B cell (primary cell): ENCODE measurements at regions of chr19 and their contacts with region 1.

Region 1: DNA sequence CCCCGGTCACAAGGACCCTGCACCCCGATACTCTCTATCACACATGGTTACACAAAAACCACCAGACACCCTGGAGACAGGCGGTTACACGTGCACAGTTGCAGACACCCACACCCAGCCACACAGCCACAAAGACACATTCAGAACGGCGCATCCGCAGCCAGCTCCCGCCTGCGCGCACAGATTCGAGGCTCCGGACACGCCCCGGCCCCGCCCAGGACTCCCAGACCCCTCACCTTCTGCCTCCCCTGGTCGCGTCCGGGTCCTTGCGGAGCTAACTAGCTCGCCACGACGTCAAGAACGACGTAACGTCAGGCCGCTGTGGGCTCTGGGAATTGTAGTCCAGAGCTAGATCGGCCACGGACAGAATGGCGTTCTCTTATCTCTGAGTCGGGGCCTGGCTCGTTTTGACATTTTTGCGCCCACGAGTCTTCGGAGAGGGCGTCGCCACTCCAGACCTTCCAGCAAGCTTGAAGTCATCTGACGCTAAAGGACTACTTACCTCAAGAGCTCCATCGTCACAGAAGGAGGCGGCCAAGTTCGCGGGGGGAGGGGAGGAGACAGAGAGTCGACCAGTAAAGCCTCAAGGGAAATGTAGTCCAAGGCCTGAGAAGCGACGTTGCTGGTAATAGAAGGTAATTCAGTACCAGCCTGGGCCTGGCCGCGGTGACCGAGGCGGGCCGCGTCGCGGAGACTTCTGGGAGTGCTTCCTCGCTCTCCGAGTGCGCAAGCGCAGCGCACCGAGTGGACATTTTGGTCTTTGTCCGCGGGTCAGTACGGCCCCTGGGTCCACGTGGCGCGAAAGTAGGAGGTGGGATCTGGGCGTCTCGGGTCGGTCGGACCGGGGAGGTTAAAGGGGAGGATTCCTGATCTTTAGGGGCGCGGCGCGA is at the starts of genes ZNF146 and ZNF565:
- DNase-seq: peak; percentile 98
- ATAC-seq: peak; percentile 89
- H3K4me3 ChIP-seq: peak within 1 kb of the TSS; percentile 70 to 99 (median 85)
- H3K4me3 Mint-ChIP-seq: no peak within 1 kb of the TSS
- H3K27ac ChIP-seq: peak within 1 kb of the TSS; percentile 87 to 97
- H3K27ac Mint-ChIP-seq: peak within 1 kb of the TSS; percentile 41
- H3K4me1 ChIP-seq: peaks cover 13 to 21% of the 10 kb centered on the region in 2 donors
- H3K4me1 Mint-ChIP-seq: peaks cover 19% of the 10 kb centered on the region
- H3K27me3 ChIP-seq: no peaks in the 10 kb centered on the region
- H3K27me3 Mint-ChIP-seq: no peaks in the 10 kb centered on the region
- CTCF ChIP-seq: no peak
- total RNA-seq, gene ZNF146: 62.2 and 69.3 TPM in 2 replicates
- total RNA-seq, gene ZNF565: 5.2 and 5.5 TPM in 2 replicates

Region 2: GRCh38 chr19:35995048-35995993 is 219.3 kb before region 1 on chr19 and contains the start of gene SDHAF1:
- CTCF ChIA-PET with region 1: no interaction called
- POLR2A ChIA-PET with region 1: no interaction called
- intact Hi-C with region 1: loop called (anchors 1 kb)
- DNase-seq: peak; percentile 93
- ATAC-seq: peak; percentile 96
- H3K4me3 ChIP-seq: peak within 1 kb of the TSS; percentile 60 to 79 (median 77)
- H3K4me3 Mint-ChIP-seq: peak within 1 kb of the TSS; percentile 97
- H3K27ac ChIP-seq: peak within 1 kb of the TSS; percentile 55 to 81
- H3K27ac Mint-ChIP-seq: peak within 1 kb of the TSS; percentile 96
- H3K4me1 ChIP-seq: peaks cover 18 to 25% of the 10 kb centered on the region in 2 donors
- H3K4me1 Mint-ChIP-seq: peaks cover 32% of the 10 kb centered on the region
- H3K27me3 ChIP-seq: no peaks in the 10 kb centered on the region
- H3K27me3 Mint-ChIP-seq: no peaks in the 10 kb centered on the region
- CTCF ChIP-seq: no peak
- total RNA-seq, gene SDHAF1: 24.2 and 24.6 TPM in 2 replicates

Region 3: DNA sequence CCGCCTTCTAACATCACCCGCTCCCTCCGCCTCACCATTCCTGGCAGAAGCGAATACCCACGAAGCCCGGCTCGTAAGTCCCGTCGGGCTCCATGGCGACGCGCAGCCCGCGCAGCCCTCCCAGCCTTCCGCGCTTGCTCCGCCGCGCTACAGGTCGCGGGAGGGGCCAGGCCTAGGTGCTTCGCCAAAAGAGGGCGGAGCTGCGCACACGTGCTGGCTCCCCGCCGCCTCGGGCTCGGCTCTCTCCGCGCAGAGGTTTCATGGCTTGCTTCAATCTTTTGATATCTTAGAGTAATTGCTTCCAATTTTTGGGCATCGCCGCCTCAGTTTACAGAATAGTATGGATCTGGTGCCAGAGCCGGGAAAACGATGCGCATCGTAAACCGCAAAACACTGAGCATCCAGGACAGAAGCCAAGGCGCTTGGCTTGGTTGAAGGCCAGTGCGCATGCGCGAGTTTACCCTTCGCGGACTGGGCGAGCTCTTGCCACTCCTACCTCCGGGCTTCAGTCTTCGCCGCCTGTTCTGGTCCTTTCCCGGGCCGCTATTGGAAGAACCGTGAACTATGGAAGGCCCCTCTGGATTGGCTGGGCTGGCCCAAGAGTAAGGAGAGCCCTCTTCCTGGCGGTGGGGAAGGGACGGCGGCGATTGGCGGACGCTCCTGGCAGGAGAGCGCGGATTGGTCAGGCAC is 99.7 kb before region 1 on chr19 and contains the start of gene POLR2I:
- CTCF ChIA-PET with region 1: interaction called, 3 read pairs
- POLR2A ChIA-PET with region 1: interaction called, 8 read pairs
- intact Hi-C with region 1: loop called (anchors 1 kb)
- DNase-seq: peak; percentile 100
- ATAC-seq: peak; percentile 87
- H3K4me3 ChIP-seq: peak within 1 kb of the TSS; percentile 76 to 91 (median 79)
- H3K4me3 Mint-ChIP-seq: peak within 1 kb of the TSS; percentile 95
- H3K27ac ChIP-seq: peak within 1 kb of the TSS; percentile 84 to 90
- H3K27ac Mint-ChIP-seq: peak within 1 kb of the TSS; percentile 99
- H3K4me1 ChIP-seq: peaks cover 16 to 23% of the 10 kb centered on the region in 2 donors
- H3K4me1 Mint-ChIP-seq: peaks cover 40% of the 10 kb centered on the region
- H3K27me3 ChIP-seq: no peaks in the 10 kb centered on the region
- H3K27me3 Mint-ChIP-seq: no peaks in the 10 kb centered on the region
- CTCF ChIP-seq: no peak
- total RNA-seq, gene POLR2I: 28.2 and 33.4 TPM in 2 replicates

Region 4: GRCh38 chr19:36139473-36140303 is 74.9 kb before region 1 on chr19 and contains the start of gene CAPNS1:
- CTCF ChIA-PET with region 1: no interaction called
- POLR2A ChIA-PET with region 1: no interaction called
- intact Hi-C with region 1: loop called (anchors 1 kb)
- DNase-seq: peak; percentile 95
- ATAC-seq: peak; percentile 76
- H3K4me3 ChIP-seq: peak within 1 kb of the TSS; percentile 76 to 99 (median 89)
- H3K4me3 Mint-ChIP-seq: peak within 1 kb of the TSS; percentile 96
- H3K27ac ChIP-seq: peak within 1 kb of the TSS; percentile 81 to 85
- H3K27ac Mint-ChIP-seq: peak within 1 kb of the TSS; percentile 94
- H3K4me1 ChIP-seq: peaks cover 4 to 14% of the 10 kb centered on the region in 2 donors
- H3K4me1 Mint-ChIP-seq: peaks cover 15% of the 10 kb centered on the region
- H3K27me3 ChIP-seq: no peaks in the 10 kb centered on the region
- H3K27me3 Mint-ChIP-seq: no peaks in the 10 kb centered on the region
- CTCF ChIP-seq: peak; percentile 37
- total RNA-seq, gene CAPNS1: 294 and 296 TPM in 2 replicates

Region 5: DNA sequence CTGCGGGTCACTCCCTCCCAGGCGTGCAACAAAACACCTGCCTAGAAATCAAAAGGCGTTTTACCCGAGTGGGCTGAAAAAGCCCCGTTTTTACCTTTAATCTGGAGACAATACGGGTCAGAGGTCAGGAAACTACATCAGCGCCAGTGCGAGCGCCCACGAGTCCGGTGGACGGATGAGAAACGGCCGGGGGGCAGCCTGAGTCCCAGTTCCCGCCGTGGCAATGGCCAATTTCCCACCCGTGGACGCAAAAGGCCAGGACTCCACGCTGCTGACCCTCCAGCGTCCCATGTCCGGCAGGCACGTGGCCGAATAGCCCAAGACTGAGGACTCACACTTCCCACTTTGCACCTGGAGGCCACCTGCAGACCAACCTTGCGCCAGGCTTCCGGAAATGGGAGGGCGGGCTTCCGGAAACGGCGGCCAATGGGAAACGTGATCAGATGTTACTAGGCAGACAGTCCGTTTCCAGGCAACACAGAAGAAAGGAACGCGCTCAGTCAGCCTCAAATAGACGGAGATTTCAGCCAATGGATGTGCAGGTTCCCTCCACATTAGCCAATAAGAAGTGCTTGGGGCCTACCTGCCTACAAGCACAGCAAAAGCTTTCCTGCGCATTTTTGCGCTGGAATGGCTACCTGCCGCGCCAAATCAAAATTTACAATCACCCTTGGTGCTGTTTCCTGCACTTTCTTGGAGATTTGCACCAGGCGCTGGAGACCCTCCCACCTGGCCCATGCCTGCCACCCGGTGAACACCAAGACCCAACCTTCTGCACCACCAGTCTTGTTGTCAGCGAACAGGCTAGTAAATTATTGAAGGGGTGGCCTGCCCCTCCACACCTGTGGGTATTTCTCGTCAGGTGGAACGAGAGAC is 117.0 kb after region 1 on chr19:
- CTCF ChIA-PET with region 1: no interaction called
- POLR2A ChIA-PET with region 1: no interaction called
- intact Hi-C with region 1: loop called (anchors 2 kb)
- DNase-seq: peak; percentile 94
- ATAC-seq: peak; percentile 97
- H3K4me3 ChIP-seq: peak overlapping the region; percentile 55 to 76 (median 75)
- H3K4me3 Mint-ChIP-seq: peak overlapping the region; percentile 89
- H3K27ac ChIP-seq: peak overlapping the region; percentile 14 to 60
- H3K27ac Mint-ChIP-seq: peak overlapping the region; percentile 87
- H3K4me1 ChIP-seq: peaks cover 15 to 17% of the 10 kb centered on the region in 2 donors
- H3K4me1 Mint-ChIP-seq: peaks cover 24% of the 10 kb centered on the region
- H3K27me3 ChIP-seq: no peaks in the 10 kb centered on the region
- H3K27me3 Mint-ChIP-seq: no peaks in the 10 kb centered on the region
- CTCF ChIP-seq: no peak